Cardiac septum (tissue), 1 donor: ENCODE measurements at regions of chr2 and their contacts with region 1.

Region 1: GRCh38 chr2:23926750-23927571 is at the start of gene ATAD2B:
- DNase-seq: peak; percentile 96
- total RNA-seq, gene ATAD2B: 14.3 TPM

Region 2: GRCh38 chr2:23624378-23624777 is 302.6 kb before region 1 on chr2:
- intact Hi-C with region 1: no loop called
- DNase-seq: no peak

Region 3: GRCh38 chr2:23939987-23940717 is 13.2 kb after region 1 on chr2 and contains the start of gene UBXN2A:
- intact Hi-C with region 1: loop called (anchors 2 kb)
- DNase-seq: peak; percentile 87
- total RNA-seq, gene UBXN2A: 22.4 TPM

Region 4: GRCh38 chr2:24015562-24016346 is 88.8 kb after region 1 on chr2:
- intact Hi-C with region 1: no loop called
- DNase-seq: no peak

Region 5: GRCh38 chr2:24046930-24047702 is 120.2 kb after region 1 on chr2 and contains the start of gene WDCP:
- intact Hi-C with region 1: loop called (anchors 10 kb)
- DNase-seq: peak; percentile 95
- total RNA-seq, gene WDCP: 4.4 TPM

Region 6: DNA sequence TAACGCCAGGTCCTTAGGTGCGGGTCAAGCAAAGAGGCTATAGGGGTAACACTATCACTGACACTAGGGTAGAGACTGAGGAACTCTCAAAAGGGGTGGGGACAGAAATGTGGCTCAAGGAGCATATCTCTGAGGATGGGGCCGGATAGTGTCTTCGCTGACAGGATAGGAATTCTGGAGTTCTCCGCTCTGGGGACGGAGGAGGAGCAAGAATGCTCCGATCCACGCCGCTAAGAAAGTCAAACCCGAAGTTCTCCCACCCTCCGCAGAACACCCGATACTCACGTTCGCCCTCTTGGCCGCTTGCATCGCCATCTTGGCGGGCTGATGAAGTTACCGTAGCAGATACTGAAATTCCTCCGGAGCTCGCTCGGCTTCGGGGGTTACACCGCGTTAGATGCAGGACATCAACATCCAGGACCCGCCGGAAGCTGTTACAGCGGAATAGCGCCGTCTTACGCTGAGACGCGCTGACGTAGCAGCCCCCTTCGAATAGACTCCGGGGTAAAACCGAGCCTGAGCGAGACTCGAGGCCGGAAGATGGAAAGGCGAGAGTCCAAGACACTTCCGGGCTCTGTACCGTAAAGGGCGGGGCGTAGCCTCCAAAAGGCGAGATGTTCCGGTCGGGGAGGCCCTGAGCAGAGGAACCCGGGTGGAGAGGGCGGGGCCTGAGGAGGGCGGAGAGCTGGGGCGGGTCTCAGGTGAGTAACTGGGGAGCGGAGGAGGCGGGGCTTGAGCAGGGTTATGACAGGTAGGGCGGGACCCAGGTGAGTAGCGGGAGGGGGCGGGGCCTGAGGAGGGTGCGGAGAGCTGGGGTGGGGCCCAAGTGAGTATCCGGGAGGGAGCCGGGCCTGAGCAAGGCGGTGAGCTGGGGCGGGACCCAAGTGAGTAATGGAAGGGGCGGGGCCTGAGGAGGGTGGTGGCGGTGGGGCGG is 149.2 kb after region 1 on chr2 and contains the start of gene SF3B6:
- intact Hi-C with region 1: loop called (anchors 2 kb)
- DNase-seq: peak; percentile 100
- total RNA-seq, gene SF3B6: 53.1 TPM

Region 7: GRCh38 chr2:24084386-24085361 is 157.7 kb after region 1 on chr2 and contains the start of gene TP53I3:
- intact Hi-C with region 1: loop called (anchors 2 kb)
- DNase-seq: peak; percentile 94
- total RNA-seq, gene TP53I3: 8.3 TPM